Lower lobe of right lung (tissue), 2 donors: ENCODE measurements at regions of chr2 and their contacts with region 1.

Region 1: DNA sequence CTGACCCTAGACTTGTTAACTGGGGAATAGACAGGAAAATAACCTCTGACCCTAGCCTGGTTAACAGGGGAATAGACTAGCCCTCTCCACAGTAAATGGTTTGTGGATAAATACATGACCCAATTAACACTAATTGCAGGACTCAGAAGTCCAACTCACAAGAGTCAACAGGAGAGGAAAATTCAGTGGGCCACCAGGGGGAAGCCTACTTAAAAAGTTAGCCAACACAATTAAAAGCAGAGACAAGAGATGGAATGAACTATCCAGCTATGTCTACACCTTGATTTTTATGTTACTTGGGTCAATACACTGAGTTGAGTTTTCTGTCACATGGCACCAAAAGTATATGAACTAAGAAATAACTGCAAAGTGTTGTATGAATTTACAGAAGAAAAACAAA is 158.8 kb upstream of the SLC39A10 start:
- DNase-seq: no peak
- ATAC-seq: peak in 1 of 2 donors; percentile 64
- H3K4me3 ChIP-seq: no peak overlapping the region
- H3K27ac ChIP-seq: no peak overlapping the region
- H3K4me1 ChIP-seq: no peaks in the 10 kb centered on the region
- H3K27me3 ChIP-seq: no peaks in the 10 kb centered on the region
- CTCF ChIP-seq: peak; percentile 60

Region 2: GRCh38 chr2:195656859-195657633 is 158.9 kb after region 1 on chr2 and contains the start of gene SLC39A10:
- intact Hi-C with region 1: loop called (anchors 5 kb)
- DNase-seq: peak; percentile 98
- ATAC-seq: peak; percentile 92 to 98
- H3K4me3 ChIP-seq: peak within 1 kb of the TSS; percentile 86
- H3K27ac ChIP-seq: peak within 1 kb of the TSS; percentile 99
- H3K4me1 ChIP-seq: peaks cover 20% of the 10 kb centered on the region
- H3K27me3 ChIP-seq: no peaks in the 10 kb centered on the region
- CTCF ChIP-seq: no peak
- total RNA-seq, gene SLC39A10: 37.2 TPM

Region 3: DNA sequence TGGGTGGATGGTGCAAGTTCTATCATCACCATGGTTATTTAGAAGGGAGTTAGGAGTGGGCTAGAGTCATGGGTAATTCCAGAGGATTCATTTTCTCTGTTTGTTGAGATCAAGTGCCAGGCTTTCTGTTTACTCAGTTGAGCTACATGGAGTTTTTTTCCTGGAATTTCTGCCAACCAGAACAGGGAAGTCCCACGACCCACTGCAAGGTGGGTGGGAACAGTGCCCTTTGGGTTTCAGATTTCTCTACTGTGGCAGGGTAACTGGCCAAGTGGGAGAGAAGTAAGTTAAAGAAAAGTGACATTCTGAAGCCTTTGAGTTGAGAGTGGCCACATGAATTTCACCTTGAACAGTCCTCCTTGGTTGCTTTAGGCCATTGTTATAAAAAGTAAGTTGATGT is 297.7 kb after region 1 on chr2:
- intact Hi-C with region 1: no loop called
- DNase-seq: no peak
- ATAC-seq: peak in 1 of 2 donors; percentile 16
- H3K4me3 ChIP-seq: no peak overlapping the region
- H3K27ac ChIP-seq: no peak overlapping the region
- H3K4me1 ChIP-seq: no peaks in the 10 kb centered on the region
- H3K27me3 ChIP-seq: no peaks in the 10 kb centered on the region
- CTCF ChIP-seq: no peak